ENCODE measurements at regions of chr6 and their contacts with region 1.

Region 1: DNA sequence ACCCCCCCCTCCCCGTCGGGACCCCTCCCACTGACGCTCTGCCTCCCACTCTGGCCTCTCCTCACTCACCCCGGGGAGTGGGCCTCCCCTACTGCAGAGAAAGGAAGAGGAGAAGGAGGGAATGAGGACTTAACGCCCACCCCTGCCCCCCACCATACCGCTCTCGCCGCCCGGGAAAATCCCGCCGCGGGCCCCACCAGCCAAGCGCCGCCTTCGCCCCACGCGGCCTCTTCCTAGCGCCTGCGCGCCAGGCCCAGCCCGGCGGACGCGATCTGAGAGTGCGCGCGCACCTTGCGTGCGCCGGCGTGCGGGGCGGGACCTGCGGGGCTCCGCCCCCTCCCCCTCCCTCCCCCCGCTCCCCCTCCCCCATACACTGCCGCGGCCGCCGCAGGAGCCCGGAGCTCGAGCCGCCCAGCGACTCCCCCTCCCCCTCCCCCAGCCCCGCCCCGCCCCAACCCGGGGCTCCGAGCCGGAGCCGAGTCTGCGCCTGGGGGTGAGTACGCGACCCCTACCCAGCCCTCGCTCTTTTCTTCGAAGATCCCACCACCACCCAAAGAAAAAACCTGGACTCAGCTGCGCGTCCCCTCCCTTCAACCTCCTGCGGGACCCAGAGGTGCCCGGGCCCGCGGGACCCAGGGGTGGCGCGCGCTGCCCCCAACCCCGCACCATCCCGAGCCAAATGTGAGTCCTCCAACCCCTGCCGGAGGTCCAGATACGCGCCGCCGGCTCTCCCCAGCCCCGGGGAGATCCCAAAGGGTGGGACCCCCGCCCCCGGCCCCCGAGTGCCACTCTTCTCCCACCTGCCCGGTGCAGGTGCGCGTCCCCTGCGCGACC is at the starts of genes MRPL14 and TMEM63B:
- DNase-seq: peak; percentile 88 to 91 (median 90)
- H3K4me3 ChIP-seq: peak within 1 kb of the TSS; percentile 37 to 72
- H3K4me3 Mint-ChIP-seq: peak within 1 kb of the TSS; percentile 94 to 99 (median 96)
- H3K27ac ChIP-seq: peak within 1 kb of the TSS; percentile 97
- H3K27ac Mint-ChIP-seq: peak within 1 kb of the TSS; percentile 89 to 99 (median 97)
- H3K4me1 ChIP-seq: peaks cover 56% of the 10 kb centered on the region
- H3K4me1 Mint-ChIP-seq: peaks cover 47 to 77% (median 58%) of the 10 kb centered on the region in 4 donors
- H3K27me3 ChIP-seq: no peaks in the 10 kb centered on the region
- H3K27me3 Mint-ChIP-seq: no peaks in the 10 kb centered on the region
- total RNA-seq, gene MRPL14: 21.7 to 23.9 TPM
- total RNA-seq, gene TMEM63B: 20.7 to 24.1 TPM

Region 2: DNA sequence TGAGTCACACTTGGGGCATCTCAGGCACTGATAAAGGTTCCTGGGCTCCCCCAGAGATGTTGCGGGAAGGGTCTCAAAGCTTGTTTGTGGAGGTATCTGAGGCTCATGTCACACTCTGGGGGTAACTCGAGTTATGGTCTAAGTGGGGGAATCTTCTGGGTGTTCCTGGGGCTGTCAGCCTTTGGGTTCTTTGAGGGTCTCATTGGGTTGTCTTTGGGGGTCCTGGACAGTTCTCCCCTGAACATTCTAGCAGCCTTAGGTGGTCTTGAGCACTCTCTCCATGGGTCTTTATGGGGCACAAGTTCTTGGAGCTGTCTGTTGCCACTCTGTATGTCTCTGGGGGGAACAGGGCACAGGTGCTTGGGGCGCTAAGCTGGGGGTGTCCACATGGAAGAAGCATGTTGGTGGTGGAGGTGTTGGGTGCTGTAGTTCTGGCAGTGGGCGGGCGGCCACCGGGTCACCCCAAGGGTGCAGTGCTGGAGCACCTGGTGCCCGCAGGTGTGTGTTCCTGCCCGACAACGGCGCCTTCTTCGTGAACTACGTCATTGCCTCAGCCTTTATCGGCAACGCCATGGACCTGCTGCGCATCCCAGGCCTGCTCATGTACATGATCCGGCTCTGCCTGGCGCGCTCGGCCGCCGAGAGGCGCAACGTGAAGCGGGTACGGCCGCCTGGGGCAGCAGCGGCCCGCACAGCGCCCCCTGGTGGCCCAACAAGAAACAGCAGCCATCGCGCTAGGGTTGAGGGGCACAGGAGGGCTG is 24.1 kb after region 1 on chr6:
- CTCF ChIA-PET with region 1: interaction called, 3 read pairs
- POLR2A ChIA-PET with region 1: interaction called, 3 read pairs
- intact Hi-C with region 1: loop called (anchors 2 kb)
- DNase-seq: peak; percentile 72 to 80 (median 72)
- H3K4me3 ChIP-seq: no peak overlapping the region
- H3K4me3 Mint-ChIP-seq: peak overlapping the region in 3 of 8 donors; percentile 43 to 73 (median 55)
- H3K27ac ChIP-seq: no peak overlapping the region
- H3K27ac Mint-ChIP-seq: peak overlapping the region in 4 of 7 donors; percentile 18 to 59 (median 28)
- H3K4me1 ChIP-seq: peaks cover 16% of the 10 kb centered on the region
- H3K4me1 Mint-ChIP-seq: peaks cover 5 to 12% (median 9%) of the 10 kb centered on the region in 4 donors
- H3K27me3 ChIP-seq: no peaks in the 10 kb centered on the region
- H3K27me3 Mint-ChIP-seq: no peaks in the 10 kb centered on the region

Region 3: GRCh38 chr6:44387346-44388133 is 260.1 kb after region 1 on chr6 and contains the start of gene CDC5L:
- CTCF ChIA-PET with region 1: no interaction called
- POLR2A ChIA-PET with region 1: no interaction called
- intact Hi-C with region 1: loop called (anchors 1 kb)
- DNase-seq: peak; percentile 95 to 97 (median 96)
- H3K4me3 ChIP-seq: peak within 1 kb of the TSS; percentile 91 to 93
- H3K4me3 Mint-ChIP-seq: peak within 1 kb of the TSS; percentile 93 to 99 (median 97)
- H3K27ac ChIP-seq: peak within 1 kb of the TSS; percentile 89
- H3K27ac Mint-ChIP-seq: peak within 1 kb of the TSS; percentile 95 to 99 (median 98)
- H3K4me1 ChIP-seq: peaks cover 30% of the 10 kb centered on the region
- H3K4me1 Mint-ChIP-seq: peaks cover 31 to 43% (median 38%) of the 10 kb centered on the region in 4 donors
- H3K27me3 ChIP-seq: no peaks in the 10 kb centered on the region
- H3K27me3 Mint-ChIP-seq: no peaks in the 10 kb centered on the region
- total RNA-seq, gene CDC5L: 20.9 to 22.4 TPM

Measured in CD4-positive, alpha-beta memory T cell (primary cell).